ENCODE measurements at regions of chr9 and their contacts with region 1.

Region 1: DNA sequence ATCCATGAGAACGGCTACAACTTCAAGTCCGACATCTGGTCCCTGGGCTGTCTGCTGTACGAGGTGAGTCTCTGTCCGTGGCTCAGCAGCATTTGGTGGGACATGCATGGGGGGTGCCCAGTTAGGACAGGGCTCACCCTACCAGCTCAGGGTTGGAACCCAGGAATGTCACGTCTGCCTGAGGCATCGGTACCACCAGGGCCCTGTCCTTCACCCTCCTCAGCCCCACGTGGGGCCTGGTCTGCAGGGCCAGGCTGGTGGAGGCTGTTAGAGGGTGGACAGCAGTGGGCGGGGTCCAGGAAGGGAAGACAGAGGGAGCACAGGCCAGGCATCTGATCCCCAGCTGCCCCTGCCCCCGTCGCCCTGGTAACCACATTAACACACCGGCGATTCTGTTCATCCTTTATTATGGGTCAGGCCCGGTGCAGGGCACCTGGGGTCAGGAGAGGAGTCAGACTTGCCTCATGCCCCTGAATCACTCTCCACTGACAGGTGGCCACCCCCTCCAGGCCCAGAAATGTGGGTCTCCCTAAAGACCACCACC is 75.6 kb downstream of the PSMB7 start:
- DNase-seq: no peak
- H3K4me3 ChIP-seq: no peak overlapping the region
- H3K27ac ChIP-seq: peak overlapping the region in 2 of 59 donors; percentile 16 to 42
- H3K27me3 ChIP-seq: no peaks in the 10 kb centered on the region
- CTCF ChIP-seq: no peak

Region 2: DNA sequence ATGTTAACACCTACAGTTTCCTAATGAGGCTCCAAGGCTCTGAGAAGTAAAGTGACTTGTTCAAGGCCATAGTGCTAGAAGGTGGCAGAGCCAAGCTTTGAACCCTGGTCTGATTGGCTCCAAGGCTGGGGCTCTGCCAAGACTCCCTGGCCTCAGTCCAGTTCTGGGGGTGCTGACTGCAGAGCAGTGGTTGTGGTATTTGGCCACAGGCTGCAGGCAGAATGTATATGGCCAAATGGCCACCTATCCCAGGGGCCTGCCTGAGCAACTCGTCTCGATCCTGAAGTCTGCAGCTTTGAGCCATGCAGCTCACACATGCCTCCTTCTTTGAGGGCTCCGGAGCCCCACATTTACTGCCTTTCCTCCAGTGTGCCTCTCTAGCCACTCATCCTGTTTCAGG is 91.6 kb before region 1 on chr9:
- intact Hi-C with region 1: loop called in 1 of 2 experiments (anchors 5 kb)
- DNase-seq: no peak
- H3K4me3 ChIP-seq: no peak overlapping the region
- H3K27ac ChIP-seq: no peak overlapping the region
- H3K27me3 ChIP-seq: no peaks in the 10 kb centered on the region
- CTCF ChIP-seq: no peak

Region 3: GRCh38 chr9:124583128-124583527 is 243.5 kb after region 1 on chr9:
- intact Hi-C with region 1: no loop called
- DNase-seq: no peak
- H3K4me3 ChIP-seq: no peak overlapping the region
- H3K27ac ChIP-seq: no peak overlapping the region
- H3K27me3 ChIP-seq: no peaks in the 10 kb centered on the region
- CTCF ChIP-seq: no peak

Measured in dorsolateral prefrontal cortex (tissue), 120 donors.